Endothelial cell of umbilical vein (primary cell): ENCODE measurements at regions of chr7 and their contacts with region 1.

Region 1: GRCh38 chr7:116588641-116589594 is 64.1 kb downstream of the CAV1 start:
- DNase-seq: peak; percentile 85
- H3K4me3 ChIP-seq: no peak overlapping the region
- H3K27ac ChIP-seq: peak overlapping the region; percentile 42
- H3K4me1 ChIP-seq: peaks cover 38% of the 10 kb centered on the region
- H3K27me3 ChIP-seq: no peaks in the 10 kb centered on the region
- CTCF ChIP-seq: peak; percentile 10 to 27
- POLR2A ChIP-seq: no peak

Region 2: DNA sequence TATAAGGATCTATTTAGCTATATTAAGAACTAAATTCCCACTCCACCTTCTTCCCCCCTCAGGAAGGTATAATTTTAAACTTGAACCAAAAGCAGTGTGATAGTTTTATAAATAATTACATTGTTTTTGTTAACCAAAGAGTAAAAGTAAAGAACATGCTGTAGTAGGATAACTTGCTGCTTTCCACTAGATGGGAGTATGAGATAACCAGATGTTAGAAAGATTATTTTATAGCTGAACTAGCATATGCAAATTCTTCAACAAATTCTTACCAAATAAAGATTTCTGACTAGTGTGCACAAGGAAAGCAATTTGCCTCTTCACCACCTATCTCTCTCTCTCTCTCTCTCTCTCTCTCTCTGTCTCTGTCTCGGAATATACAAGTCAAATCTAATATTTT is 346.7 kb before region 1 on chr7:
- CTCF ChIA-PET with region 1: interaction called, 26 read pairs
- POLR2A ChIA-PET with region 1: no interaction called
- dilution Hi-C with region 1: no loop called
- intact Hi-C with region 1: no loop called
- DNase-seq: no peak
- H3K4me3 ChIP-seq: no peak overlapping the region
- H3K27ac ChIP-seq: no peak overlapping the region
- H3K4me1 ChIP-seq: peaks cover 8% of the 10 kb centered on the region
- H3K27me3 ChIP-seq: no peaks in the 10 kb centered on the region
- CTCF ChIP-seq: no peak
- POLR2A ChIP-seq: no peak

Region 3: DNA sequence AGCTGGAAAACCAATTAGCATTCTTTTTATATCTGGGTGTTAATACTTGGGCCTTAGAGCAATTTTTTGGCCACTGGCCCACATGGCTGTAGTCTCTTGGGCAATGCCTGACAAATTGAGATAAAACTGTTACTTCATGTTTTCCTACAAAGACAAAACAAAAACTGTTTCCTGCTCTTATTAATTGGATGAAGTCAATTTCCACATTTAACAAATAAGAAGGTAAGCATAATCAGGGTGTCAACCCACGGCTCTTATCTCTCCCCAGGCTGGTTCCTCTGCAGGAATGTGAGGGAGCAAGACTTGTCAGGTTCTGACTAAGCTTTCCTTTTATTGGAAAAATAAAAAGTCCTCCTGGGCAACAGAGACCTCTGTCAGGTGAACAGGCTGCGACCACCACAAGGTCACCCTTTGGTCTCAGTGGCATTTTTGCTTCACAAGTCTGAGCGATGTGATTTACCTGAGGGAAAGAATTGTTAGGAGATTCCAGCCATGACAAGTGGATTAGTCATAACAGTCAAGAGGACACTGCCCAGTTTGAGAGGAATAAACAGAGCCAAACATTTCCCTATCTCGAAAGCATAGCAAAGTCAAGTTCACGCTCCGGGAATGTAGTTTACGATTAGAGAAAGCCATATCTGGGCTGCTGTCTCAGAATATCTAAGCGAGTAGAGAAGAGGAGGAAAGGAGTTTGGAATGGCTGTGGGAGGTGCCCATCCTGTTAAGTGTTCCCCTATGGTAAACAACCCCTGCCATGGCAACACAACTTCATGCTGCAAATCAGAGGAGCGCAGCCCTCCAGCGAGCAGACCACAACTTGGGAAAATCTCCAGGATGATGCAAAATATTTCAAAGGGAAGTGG is 234.1 kb before region 1 on chr7:
- CTCF ChIA-PET with region 1: interaction called, 5 read pairs
- POLR2A ChIA-PET with region 1: no interaction called
- dilution Hi-C with region 1: no loop called
- intact Hi-C with region 1: loop called (anchors 1 kb)
- DNase-seq: peak; percentile 99
- H3K4me3 ChIP-seq: peak overlapping the region in 1 of 3 experiments; percentile 14
- H3K27ac ChIP-seq: peak overlapping the region; percentile 99
- H3K4me1 ChIP-seq: peaks cover 63% of the 10 kb centered on the region
- H3K27me3 ChIP-seq: no peaks in the 10 kb centered on the region
- CTCF ChIP-seq: no peak
- POLR2A ChIP-seq: no peak

Region 4: GRCh38 chr7:116543664-116544063 is 45.3 kb before region 1 on chr7:
- CTCF ChIA-PET with region 1: interaction called, 20 read pairs
- POLR2A ChIA-PET with region 1: no interaction called
- dilution Hi-C with region 1: no loop called
- intact Hi-C with region 1: no loop called
- DNase-seq: peak; percentile 69
- H3K4me3 ChIP-seq: no peak overlapping the region
- H3K27ac ChIP-seq: peak overlapping the region; percentile 26
- H3K4me1 ChIP-seq: peaks cover 18% of the 10 kb centered on the region
- H3K27me3 ChIP-seq: no peaks in the 10 kb centered on the region
- CTCF ChIP-seq: no peak
- POLR2A ChIP-seq: no peak

Region 5: GRCh38 chr7:116616555-116617059 is 27.7 kb after region 1 on chr7:
- CTCF ChIA-PET with region 1: interaction called, 15 read pairs
- POLR2A ChIA-PET with region 1: interaction called, 3 read pairs
- dilution Hi-C with region 1: no loop called
- intact Hi-C with region 1: loop called (anchors 1 kb)
- DNase-seq: peak; percentile 91
- H3K4me3 ChIP-seq: no peak overlapping the region
- H3K27ac ChIP-seq: peak overlapping the region; percentile 87
- H3K4me1 ChIP-seq: peaks cover 35% of the 10 kb centered on the region
- H3K27me3 ChIP-seq: no peaks in the 10 kb centered on the region
- CTCF ChIP-seq: no peak
- POLR2A ChIP-seq: no peak

Region 6: DNA sequence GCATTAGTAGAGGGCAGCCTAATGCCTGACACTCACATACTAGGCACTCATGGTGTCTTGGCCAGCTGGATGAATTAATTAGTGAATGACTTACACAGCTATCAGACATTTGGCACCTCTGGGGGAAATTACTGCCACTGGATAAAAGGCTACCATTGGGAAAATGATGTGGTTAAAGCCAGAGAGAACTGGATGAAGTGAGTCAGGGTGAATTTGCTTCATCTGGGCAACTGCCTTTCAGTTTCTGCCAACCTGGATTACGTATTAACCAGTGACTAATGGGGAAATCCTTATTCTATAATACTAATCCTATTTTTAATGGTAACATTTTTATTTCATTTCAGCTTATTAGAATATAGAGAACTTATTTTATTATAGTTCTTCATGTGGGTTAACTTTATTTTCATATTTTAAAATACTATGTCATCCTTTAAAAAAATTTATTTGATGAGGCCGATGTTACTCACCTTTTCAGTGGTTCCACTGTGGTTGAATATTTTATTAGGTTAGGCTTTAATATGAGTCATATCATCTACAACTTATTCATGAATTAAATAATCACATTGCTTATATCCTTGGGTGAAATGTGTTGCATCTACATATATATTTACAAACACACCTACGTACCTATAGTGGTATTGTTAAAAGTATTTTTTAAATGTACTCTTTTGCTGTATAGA is 187.8 kb after region 1 on chr7:
- CTCF ChIA-PET with region 1: interaction called, 21 read pairs
- POLR2A ChIA-PET with region 1: no interaction called
- dilution Hi-C with region 1: no loop called
- intact Hi-C with region 1: no loop called
- DNase-seq: peak; percentile 78
- H3K4me3 ChIP-seq: no peak overlapping the region
- H3K27ac ChIP-seq: peak overlapping the region; percentile 47
- H3K4me1 ChIP-seq: peaks cover 53% of the 10 kb centered on the region
- H3K27me3 ChIP-seq: no peaks in the 10 kb centered on the region
- CTCF ChIP-seq: no peak
- POLR2A ChIP-seq: no peak

Region 7: DNA sequence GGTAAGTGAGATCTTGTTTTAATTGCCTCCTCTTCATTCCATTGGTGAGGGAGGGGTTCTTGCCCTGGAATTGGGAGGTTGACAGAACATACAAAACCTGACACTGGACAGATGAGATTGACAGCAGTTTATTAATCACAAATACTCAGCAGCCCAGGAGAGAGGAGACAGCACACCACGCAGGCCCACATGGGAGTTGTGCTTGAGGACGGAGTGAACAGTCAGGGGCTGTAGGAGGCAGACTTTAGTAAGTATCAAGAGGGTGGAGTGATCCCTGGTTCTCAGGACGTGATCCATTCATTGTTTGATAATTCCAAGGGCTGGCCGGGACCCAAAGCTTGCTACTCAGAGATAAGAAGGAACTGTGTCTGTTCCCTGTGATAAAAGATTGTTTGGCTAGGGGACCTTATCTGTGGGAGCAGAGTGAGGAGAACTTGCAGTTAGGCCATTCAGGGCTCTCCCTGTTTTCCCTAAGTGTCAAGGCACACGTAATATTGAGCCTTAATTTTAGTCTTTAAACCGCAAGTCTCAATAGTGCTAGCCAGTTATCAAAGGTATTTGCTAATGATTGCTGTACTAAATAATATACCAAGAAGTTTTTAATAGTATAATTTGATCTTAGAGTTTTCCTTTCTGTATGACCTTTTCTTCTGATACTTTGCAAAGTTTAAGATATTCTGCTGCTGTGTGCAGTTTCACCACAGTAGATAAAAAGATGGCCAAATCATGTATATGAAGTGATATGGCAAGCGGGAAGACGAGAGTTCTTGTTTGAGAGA is 287.9 kb after region 1 on chr7:
- CTCF ChIA-PET with region 1: interaction called, 4 read pairs
- POLR2A ChIA-PET with region 1: no interaction called
- dilution Hi-C with region 1: no loop called
- intact Hi-C with region 1: loop called (anchors 5 kb)
- DNase-seq: peak; percentile 99
- H3K4me3 ChIP-seq: peak overlapping the region in 1 of 3 experiments; percentile 27
- H3K27ac ChIP-seq: peak overlapping the region; percentile 65
- H3K4me1 ChIP-seq: peaks cover 69% of the 10 kb centered on the region
- H3K27me3 ChIP-seq: no peaks in the 10 kb centered on the region
- CTCF ChIP-seq: peak; percentile 18 to 27
- POLR2A ChIP-seq: peak; percentile 90